ENCODE measurements at regions of chr13 and their contacts with region 1.

Region 1: DNA sequence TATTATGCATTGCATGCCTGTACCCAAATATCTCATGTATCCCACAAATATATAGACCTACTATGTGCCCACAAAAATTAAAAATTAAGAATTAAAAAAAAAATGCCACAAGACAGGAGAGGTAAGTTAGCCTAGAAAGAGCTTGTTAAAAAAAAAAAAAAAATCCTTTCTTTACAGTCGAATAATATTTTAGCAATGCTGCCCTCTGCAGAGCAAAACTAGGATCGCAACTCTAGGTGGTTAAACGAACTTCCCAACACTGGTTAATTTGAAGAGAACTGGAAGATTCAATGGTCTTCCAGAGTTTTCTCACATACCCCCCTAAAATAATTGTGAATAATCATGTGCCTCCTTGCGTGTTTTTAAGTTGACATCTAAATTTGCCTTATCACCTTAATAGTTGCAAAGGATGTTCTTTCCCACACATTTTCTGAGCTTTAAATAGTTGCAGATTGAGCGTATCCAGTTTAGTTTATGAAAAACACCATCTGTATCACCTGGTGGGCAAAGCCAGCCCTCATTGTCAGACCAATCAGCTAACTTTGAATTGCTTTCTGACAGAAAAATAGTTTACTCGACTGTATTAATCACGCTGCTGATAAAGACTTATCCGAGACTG is 47.4 kb upstream of the RCBTB2 start:
- DNase-seq: peak; percentile 80
- ATAC-seq: peak; percentile 51
- H3K4me3 Mint-ChIP-seq: no peak overlapping the region
- H3K27ac Mint-ChIP-seq: no peak overlapping the region
- H3K4me1 Mint-ChIP-seq: peaks cover 43% of the 10 kb centered on the region
- H3K27me3 Mint-ChIP-seq: peaks cover 44% of the 10 kb centered on the region

Region 2: DNA sequence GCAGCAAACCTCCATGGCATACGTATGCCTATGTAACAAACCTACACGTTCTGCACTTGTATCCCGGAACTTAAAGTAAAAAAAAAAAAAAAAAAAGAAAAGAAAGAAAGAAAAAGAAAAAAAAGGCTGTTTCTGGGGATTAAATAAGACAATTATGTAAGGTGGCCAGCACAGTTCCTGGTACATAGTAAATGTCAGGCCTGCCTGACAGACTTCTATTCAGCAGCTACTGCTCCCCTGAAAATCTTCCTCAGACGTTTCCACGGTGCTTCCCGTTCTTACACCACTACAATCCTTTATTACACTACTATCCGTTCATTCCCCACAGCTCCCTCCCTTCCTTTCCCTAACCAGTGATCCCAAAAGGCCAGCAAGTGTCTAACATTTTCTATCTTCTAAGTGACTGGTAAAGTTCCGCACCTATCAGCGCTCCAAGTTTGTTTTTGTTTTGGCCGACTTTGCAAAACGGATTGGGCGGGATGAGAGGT is 277.4 kb before region 1 on chr13:
- CTCF ChIA-PET with region 1: interaction called, 11 read pairs
- DNase-seq: no peak
- ATAC-seq: no peak
- H3K4me3 Mint-ChIP-seq: peak overlapping the region; percentile 86
- H3K27ac Mint-ChIP-seq: peak overlapping the region; percentile 88
- H3K4me1 Mint-ChIP-seq: peaks cover 30% of the 10 kb centered on the region
- H3K27me3 Mint-ChIP-seq: no peaks in the 10 kb centered on the region

Region 3: DNA sequence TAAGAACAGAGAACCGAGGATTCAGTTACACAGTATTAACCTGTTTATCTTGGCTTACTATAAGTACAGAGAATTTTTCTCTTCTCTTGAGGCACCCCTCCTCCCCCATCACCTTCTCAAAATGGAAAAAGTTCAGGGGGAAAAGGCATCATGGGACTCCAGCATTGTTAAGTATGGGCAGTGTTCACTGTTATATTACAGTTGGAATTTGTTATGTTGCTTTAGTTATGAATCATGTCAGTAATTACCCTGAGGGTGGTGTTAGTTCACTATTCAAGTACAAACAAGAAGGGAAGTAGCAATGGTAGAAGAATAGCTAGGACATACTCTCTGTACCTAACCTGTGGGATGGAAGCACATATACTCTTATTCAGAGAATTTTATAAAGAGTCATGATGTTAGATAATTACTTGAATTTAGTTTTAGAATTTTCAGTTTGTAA is 179.4 kb before region 1 on chr13:
- CTCF ChIA-PET with region 1: interaction called, 19 read pairs
- DNase-seq: no peak
- ATAC-seq: peak; percentile 59
- H3K4me3 Mint-ChIP-seq: peak overlapping the region; percentile 27
- H3K27ac Mint-ChIP-seq: peak overlapping the region; percentile 46
- H3K4me1 Mint-ChIP-seq: peaks cover 59% of the 10 kb centered on the region
- H3K27me3 Mint-ChIP-seq: no peaks in the 10 kb centered on the region

Region 4: GRCh38 chr13:48532506-48533499 is 47.5 kb before region 1 on chr13 and contains the start of gene RCBTB2:
- CTCF ChIA-PET with region 1: interaction called, 12 read pairs
- DNase-seq: peak; percentile 99
- ATAC-seq: peak; percentile 94
- H3K4me3 Mint-ChIP-seq: peak within 1 kb of the TSS; percentile 81
- H3K27ac Mint-ChIP-seq: peak within 1 kb of the TSS; percentile 96
- H3K4me1 Mint-ChIP-seq: peaks cover 43% of the 10 kb centered on the region
- H3K27me3 Mint-ChIP-seq: no peaks in the 10 kb centered on the region
- total RNA-seq, gene RCBTB2: 17.0 to 22.5 TPM

Region 5: GRCh38 chr13:48769107-48769704 is 188.9 kb after region 1 on chr13:
- CTCF ChIA-PET with region 1: interaction called, 17 read pairs
- DNase-seq: peak; percentile 90
- ATAC-seq: peak; percentile 96
- H3K4me3 Mint-ChIP-seq: no peak overlapping the region
- H3K27ac Mint-ChIP-seq: no peak overlapping the region
- H3K4me1 Mint-ChIP-seq: peaks cover 29% of the 10 kb centered on the region
- H3K27me3 Mint-ChIP-seq: peaks cover 22% of the 10 kb centered on the region